ENCODE measurements at regions of chr9 and their contacts with region 1.

Region 1: GRCh38 chr9:38079461-38080031 is 10.5 kb upstream of the SHB start:
- DNase-seq: no peak
- H3K4me3 ChIP-seq: no peak overlapping the region
- H3K27ac ChIP-seq: no peak overlapping the region
- H3K27me3 ChIP-seq: no peaks in the 10 kb centered on the region
- CTCF ChIP-seq: no peak

Region 2: GRCh38 chr9:38141746-38142591 is 62.4 kb after region 1 on chr9:
- intact Hi-C with region 1: loop called in 1 of 2 experiments (anchors 10 kb)
- DNase-seq: no peak
- H3K4me3 ChIP-seq: no peak overlapping the region
- H3K27ac ChIP-seq: no peak overlapping the region
- H3K27me3 ChIP-seq: peaks cover 0 to 18% (median 3%) of the 10 kb centered on the region in 45 donors
- CTCF ChIP-seq: no peak

Region 3: GRCh38 chr9:38251036-38251860 is 171.7 kb after region 1 on chr9:
- intact Hi-C with region 1: no loop called
- DNase-seq: no peak
- H3K4me3 ChIP-seq: no peak overlapping the region
- H3K27ac ChIP-seq: no peak overlapping the region
- H3K27me3 ChIP-seq: no peaks in the 10 kb centered on the region
- CTCF ChIP-seq: no peak